ENCODE measurements at regions of chr20 and their contacts with region 1.

Region 1: GRCh38 chr20:64079273-64080012 is at the start of gene RGS19:
- DNase-seq: peak; percentile 76
- H3K4me3 Mint-ChIP-seq: peak within 1 kb of the TSS; percentile 90
- H3K27ac Mint-ChIP-seq: peak within 1 kb of the TSS; percentile 92
- H3K4me1 Mint-ChIP-seq: peaks cover 27% of the 10 kb centered on the region
- H3K27me3 Mint-ChIP-seq: peaks cover 3% of the 10 kb centered on the region
- total RNA-seq, gene RGS19: 43.2 to 44.4 TPM

Region 2: GRCh38 chr20:63973636-63974402 is 105.6 kb before region 1 on chr20:
- CTCF ChIA-PET with region 1: no interaction called
- POLR2A ChIA-PET with region 1: no interaction called
- intact Hi-C with region 1: no loop called
- DNase-seq: peak; percentile 83
- H3K4me3 Mint-ChIP-seq: no peak overlapping the region
- H3K27ac Mint-ChIP-seq: peak overlapping the region; percentile 31
- H3K4me1 Mint-ChIP-seq: peaks cover 37% of the 10 kb centered on the region
- H3K27me3 Mint-ChIP-seq: no peaks in the 10 kb centered on the region

Region 3: GRCh38 chr20:64030371-64031134 is 48.9 kb before region 1 on chr20:
- CTCF ChIA-PET with region 1: no interaction called
- POLR2A ChIA-PET with region 1: no interaction called
- intact Hi-C with region 1: no loop called
- DNase-seq: no peak
- H3K4me3 Mint-ChIP-seq: no peak overlapping the region
- H3K27ac Mint-ChIP-seq: no peak overlapping the region
- H3K4me1 Mint-ChIP-seq: peaks cover 19% of the 10 kb centered on the region
- H3K27me3 Mint-ChIP-seq: no peaks in the 10 kb centered on the region

Region 4: GRCh38 chr20:64101731-64102621 is 22.5 kb after region 1 on chr20:
- CTCF ChIA-PET with region 1: interaction called, 11 read pairs
- POLR2A ChIA-PET with region 1: no interaction called
- intact Hi-C with region 1: no loop called
- DNase-seq: peak; percentile 76
- H3K4me3 Mint-ChIP-seq: peak overlapping the region; percentile 10
- H3K27ac Mint-ChIP-seq: no peak overlapping the region
- H3K4me1 Mint-ChIP-seq: peaks cover 7% of the 10 kb centered on the region
- H3K27me3 Mint-ChIP-seq: peaks cover 20% of the 10 kb centered on the region

Region 5: GRCh38 chr20:64119681-64120341 is 40.4 kb after region 1 on chr20:
- CTCF ChIA-PET with region 1: interaction called, 51 read pairs
- POLR2A ChIA-PET with region 1: no interaction called
- intact Hi-C with region 1: loop called (anchors 1 kb)
- DNase-seq: no peak
- H3K4me3 Mint-ChIP-seq: peak overlapping the region; percentile 35
- H3K27ac Mint-ChIP-seq: no peak overlapping the region
- H3K4me1 Mint-ChIP-seq: peaks cover 8% of the 10 kb centered on the region
- H3K27me3 Mint-ChIP-seq: peaks cover 8% of the 10 kb centered on the region

Region 6: GRCh38 chr20:64255361-64256281 is 176.2 kb after region 1 on chr20 and contains the start of gene PCMTD2:
- CTCF ChIA-PET with region 1: no interaction called
- POLR2A ChIA-PET with region 1: interaction called, 3 read pairs
- intact Hi-C with region 1: loop called (anchors 5 kb)
- DNase-seq: peak; percentile 92
- H3K4me3 Mint-ChIP-seq: peak within 1 kb of the TSS; percentile 85
- H3K27ac Mint-ChIP-seq: peak within 1 kb of the TSS; percentile 82
- H3K4me1 Mint-ChIP-seq: peaks cover 49% of the 10 kb centered on the region
- H3K27me3 Mint-ChIP-seq: peaks cover 2% of the 10 kb centered on the region
- total RNA-seq, gene PCMTD2: 32.8 to 33.7 TPM

Measured in activated CD4-positive, alpha-beta memory T cell treated with anti-CD3 and anti-CD28 coated beads for 36 hours (primary cell).